MCF 10A (cell line): ENCODE measurements at regions of chr5 and their contacts with region 1.

Region 1: GRCh38 chr5:167565032-167565954 is 726.2 kb upstream of the WWC1 start:
- DNase-seq: peak; percentile 64
- H3K4me3 Mint-ChIP-seq: no peak overlapping the region
- H3K27ac Mint-ChIP-seq: no peak overlapping the region
- H3K4me1 Mint-ChIP-seq: no peaks in the 10 kb centered on the region
- H3K27me3 Mint-ChIP-seq: peaks cover 9% of the 10 kb centered on the region
- CTCF ChIP-seq: peak; percentile 77

Region 2: GRCh38 chr5:166961039-166961438 is 604.3 kb before region 1 on chr5:
- CTCF ChIA-PET with region 1: interaction called, 18 read pairs
- POLR2A ChIA-PET with region 1: interaction called, 3 read pairs
- intact Hi-C with region 1: loop called (anchors 1 kb)
- DNase-seq: peak; percentile 42
- H3K4me3 Mint-ChIP-seq: no peak overlapping the region
- H3K27ac Mint-ChIP-seq: no peak overlapping the region
- H3K4me1 Mint-ChIP-seq: no peaks in the 10 kb centered on the region
- H3K27me3 Mint-ChIP-seq: no peaks in the 10 kb centered on the region
- CTCF ChIP-seq: peak; percentile 39

Region 3: DNA sequence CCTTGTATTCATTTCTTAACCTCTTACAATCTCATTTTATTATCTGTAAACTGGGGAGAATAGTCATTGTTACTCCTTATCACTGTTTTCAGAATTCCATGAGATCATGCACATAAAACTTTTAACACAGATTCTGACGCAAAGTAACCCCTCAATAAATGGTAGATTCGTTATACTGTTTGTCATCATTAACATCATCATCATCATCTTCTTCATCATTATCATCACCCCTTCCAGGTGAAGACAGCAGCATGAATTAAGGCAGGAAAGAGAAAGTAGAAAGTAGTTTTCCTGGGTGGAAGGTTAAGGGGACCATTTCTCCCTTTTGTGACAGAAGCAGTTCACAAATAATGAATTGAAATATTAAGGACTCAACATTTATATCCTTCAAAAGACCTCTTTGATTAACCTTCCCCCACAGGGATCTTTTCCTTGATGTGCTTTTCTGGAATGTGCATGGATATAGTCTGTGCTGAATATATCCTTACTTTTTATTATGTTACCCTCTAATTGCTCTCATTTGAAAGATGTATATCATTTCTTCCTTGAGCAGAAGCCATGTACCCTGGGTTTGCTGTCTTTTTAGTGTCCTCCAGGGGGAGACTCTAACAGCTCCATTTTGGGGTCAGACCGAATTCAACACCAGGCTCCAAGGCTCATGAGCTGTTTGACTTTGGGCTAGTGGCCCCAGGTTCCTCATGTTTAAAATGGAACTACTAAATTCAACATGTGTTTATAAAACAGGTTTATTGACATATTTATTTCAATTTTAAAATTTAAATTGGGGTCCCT is 303.8 kb before region 1 on chr5:
- CTCF ChIA-PET with region 1: interaction called, 8 read pairs
- POLR2A ChIA-PET with region 1: no interaction called
- intact Hi-C with region 1: loop called (anchors 2 kb)
- DNase-seq: peak; percentile 61
- H3K4me3 Mint-ChIP-seq: no peak overlapping the region
- H3K27ac Mint-ChIP-seq: no peak overlapping the region
- H3K4me1 Mint-ChIP-seq: no peaks in the 10 kb centered on the region
- H3K27me3 Mint-ChIP-seq: no peaks in the 10 kb centered on the region
- CTCF ChIP-seq: peak; percentile 62

Region 4: DNA sequence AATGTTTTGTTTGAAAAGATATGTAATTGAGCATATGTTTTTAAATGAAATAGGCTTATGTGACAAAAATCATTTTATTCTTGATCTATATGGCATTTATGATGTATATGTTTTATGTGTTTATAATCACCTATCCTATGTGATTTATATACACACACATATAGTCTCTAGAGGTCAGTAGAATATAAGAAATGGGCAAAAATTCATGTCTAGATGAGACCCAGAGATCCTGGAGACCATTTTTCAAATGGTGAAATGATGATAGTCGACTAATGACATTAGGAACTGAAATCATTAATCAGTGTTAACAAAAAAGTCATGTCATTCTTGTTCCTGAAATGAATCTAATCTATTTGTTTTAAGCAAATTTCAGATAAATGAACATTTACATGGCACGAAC is 17.0 kb after region 1 on chr5:
- CTCF ChIA-PET with region 1: interaction called, 36 read pairs
- POLR2A ChIA-PET with region 1: interaction called, 11 read pairs
- intact Hi-C with region 1: no loop called
- DNase-seq: peak; percentile 52
- H3K4me3 Mint-ChIP-seq: no peak overlapping the region
- H3K27ac Mint-ChIP-seq: no peak overlapping the region
- H3K4me1 Mint-ChIP-seq: peaks cover 2% of the 10 kb centered on the region
- H3K27me3 Mint-ChIP-seq: peaks cover 33% of the 10 kb centered on the region
- CTCF ChIP-seq: peak; percentile 68

Region 5: DNA sequence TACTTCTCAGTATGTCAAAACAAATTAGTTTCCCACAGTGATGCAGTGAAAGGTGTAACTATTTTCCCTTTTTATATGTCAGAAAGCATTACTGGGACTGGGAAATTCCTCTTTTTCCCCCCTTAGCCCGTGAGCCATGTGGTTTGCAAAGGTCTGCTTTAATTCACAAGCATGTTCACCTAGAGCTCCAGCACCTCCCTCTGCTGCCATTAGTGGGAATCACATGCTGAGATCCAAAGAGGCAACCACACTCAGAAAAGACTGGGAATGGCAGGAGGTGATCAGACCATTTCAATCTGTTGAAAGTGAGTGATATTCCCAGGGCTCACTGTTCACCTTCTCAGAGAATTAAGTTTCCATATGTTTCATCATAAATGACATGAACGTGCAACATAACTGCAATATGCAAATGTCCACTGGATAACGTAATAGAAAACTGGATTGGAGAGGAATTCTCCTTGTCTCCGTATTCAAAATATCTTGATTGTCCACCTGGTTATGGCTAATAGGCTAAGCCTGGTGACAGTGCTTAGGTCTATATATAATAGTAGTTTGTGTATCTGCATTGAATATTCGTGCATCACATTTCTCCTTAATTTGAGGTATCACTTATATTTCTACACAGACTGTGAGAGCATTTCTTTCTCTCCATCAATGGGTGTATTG is 22.6 kb after region 1 on chr5:
- CTCF ChIA-PET with region 1: interaction called, 36 read pairs
- POLR2A ChIA-PET with region 1: interaction called, 12 read pairs
- intact Hi-C with region 1: loop called (anchors 1 kb)
- DNase-seq: peak; percentile 78
- H3K4me3 Mint-ChIP-seq: no peak overlapping the region
- H3K27ac Mint-ChIP-seq: no peak overlapping the region
- H3K4me1 Mint-ChIP-seq: peaks cover 10% of the 10 kb centered on the region
- H3K27me3 Mint-ChIP-seq: no peaks in the 10 kb centered on the region
- CTCF ChIP-seq: peak; percentile 65

Region 6: GRCh38 chr5:167608390-167609272 is 43.3 kb after region 1 on chr5:
- CTCF ChIA-PET with region 1: no interaction called
- POLR2A ChIA-PET with region 1: no interaction called
- intact Hi-C with region 1: no loop called
- DNase-seq: no peak
- H3K4me3 Mint-ChIP-seq: no peak overlapping the region
- H3K27ac Mint-ChIP-seq: no peak overlapping the region
- H3K4me1 Mint-ChIP-seq: no peaks in the 10 kb centered on the region
- H3K27me3 Mint-ChIP-seq: no peaks in the 10 kb centered on the region
- CTCF ChIP-seq: no peak